ENCODE measurements at regions of chr20 and their contacts with region 1.

Region 1: GRCh38 chr20:62302341-62303058 is at the start of gene ADRM1:
- DNase-seq: peak; percentile 82 to 98
- H3K4me3 ChIP-seq: peak within 1 kb of the TSS; percentile 70 to 92
- H3K27ac ChIP-seq: peak within 1 kb of the TSS; percentile 98 to 99
- H3K4me1 ChIP-seq: peaks cover 12 to 20% of the 10 kb centered on the region in 2 donors
- H3K27me3 ChIP-seq: no peaks in the 10 kb centered on the region
- CTCF ChIP-seq: peak; percentile 98 to 99 (median 99)
- total RNA-seq, gene ADRM1: 236 TPM

Region 2: GRCh38 chr20:62339647-62340070 is 37.2 kb after region 1 on chr20:
- intact Hi-C with region 1: no loop called
- DNase-seq: no peak
- H3K4me3 ChIP-seq: no peak overlapping the region
- H3K27ac ChIP-seq: no peak overlapping the region
- H3K4me1 ChIP-seq: no peaks in the 10 kb centered on the region
- H3K27me3 ChIP-seq: no peaks in the 10 kb centered on the region
- CTCF ChIP-seq: no peak

Region 3: DNA sequence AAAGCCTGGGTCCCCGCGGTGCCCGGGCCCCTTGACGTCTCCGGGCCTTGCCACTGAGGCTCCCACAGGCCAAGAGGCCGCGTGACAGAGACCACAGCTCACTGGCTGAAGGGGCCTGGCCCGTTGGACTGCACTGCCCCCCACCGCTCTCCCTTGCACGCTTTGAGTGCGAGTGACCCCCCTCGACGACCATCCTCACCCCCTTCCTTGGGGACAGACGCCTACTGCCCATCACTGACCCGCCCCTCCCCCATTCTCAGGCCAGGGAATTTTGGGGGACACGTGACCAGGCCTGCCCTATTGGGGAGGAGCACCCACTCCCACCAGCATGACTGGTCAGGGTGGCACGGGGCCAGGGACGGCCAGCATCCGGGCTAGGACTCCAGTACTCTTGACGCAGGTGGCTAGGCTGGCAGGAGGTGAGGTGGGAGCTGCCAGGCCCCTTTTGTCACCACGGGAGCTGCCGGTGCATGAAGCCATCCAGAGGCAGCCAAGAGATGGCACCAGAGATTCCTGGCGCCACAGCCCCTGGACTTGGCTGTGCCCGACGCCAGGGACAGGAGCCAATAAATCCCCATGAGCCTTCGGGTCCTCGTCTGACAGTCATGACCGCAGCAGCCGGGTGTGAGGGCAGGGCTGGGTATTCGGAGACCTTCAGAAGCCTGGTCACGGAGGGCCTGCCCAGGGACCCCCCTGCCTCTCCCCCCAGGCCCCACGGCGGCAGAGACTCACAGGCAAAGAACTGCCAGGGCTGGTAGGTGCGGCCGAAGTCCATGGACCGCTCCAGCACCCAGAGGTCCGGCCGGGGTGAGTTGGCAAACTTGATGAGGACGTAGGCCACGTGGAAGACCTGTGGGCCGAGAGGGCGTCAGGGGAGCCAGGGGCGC is 50.1 kb after region 1 on chr20:
- intact Hi-C with region 1: loop called (anchors 1 kb)
- DNase-seq: peak in 1 of 2 donors; percentile 94
- H3K4me3 ChIP-seq: peak overlapping the region; percentile 16 to 35
- H3K27ac ChIP-seq: peak overlapping the region; percentile 98 to 99
- H3K4me1 ChIP-seq: peaks cover 40 to 54% of the 10 kb centered on the region in 2 donors
- H3K27me3 ChIP-seq: no peaks in the 10 kb centered on the region
- CTCF ChIP-seq: peak; percentile 39 to 61 (median 52)

Region 4: DNA sequence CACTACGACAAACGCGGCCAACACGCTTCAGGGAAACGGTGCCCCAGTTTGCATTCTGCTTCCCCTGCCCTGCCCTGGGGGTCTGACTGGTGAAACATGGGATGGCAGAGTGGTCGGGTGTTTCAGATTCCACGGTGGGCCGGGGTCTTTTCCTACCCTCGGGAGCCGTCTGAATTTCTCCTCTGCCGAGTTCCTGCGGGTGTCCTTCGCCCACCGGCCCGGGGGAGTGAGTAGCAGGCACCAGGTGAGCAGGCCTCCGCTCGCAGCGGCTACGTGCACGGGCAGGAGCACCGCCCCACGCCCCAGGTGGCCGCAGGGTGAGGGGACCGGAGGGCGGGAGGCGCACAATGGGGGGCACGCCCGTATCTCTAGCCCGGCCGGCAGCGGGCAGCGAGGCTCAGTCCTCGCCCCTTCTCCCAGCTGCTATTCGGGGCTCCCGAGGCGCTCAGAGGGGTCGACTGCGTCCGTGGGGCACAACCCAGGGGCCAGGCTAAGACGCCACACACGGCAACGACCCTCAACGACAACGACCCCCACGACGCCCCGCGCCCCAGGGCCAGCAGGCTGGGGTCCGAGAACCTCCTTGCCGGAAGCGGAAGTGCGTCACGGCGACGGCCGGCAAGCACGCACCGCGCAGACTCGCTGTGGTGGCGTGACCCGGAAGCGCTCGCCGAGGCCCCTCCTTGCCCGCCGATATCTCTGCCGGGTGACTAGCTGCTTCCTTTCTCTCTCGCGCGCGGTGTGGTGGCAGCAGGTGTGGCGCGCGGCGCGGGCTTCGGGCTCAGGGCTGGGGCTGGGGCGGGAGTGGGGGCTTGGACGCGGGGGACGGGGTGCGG is 84.1 kb after region 1 on chr20 and contains the start of gene RPS21:
- intact Hi-C with region 1: loop called (anchors 1 kb)
- DNase-seq: peak; percentile 57 to 96
- H3K4me3 ChIP-seq: peak within 1 kb of the TSS; percentile 81 to 93
- H3K27ac ChIP-seq: peak within 1 kb of the TSS; percentile 93 to 94
- H3K4me1 ChIP-seq: peaks cover 15% of the 10 kb centered on the region in 2 donors
- H3K27me3 ChIP-seq: no peaks in the 10 kb centered on the region
- CTCF ChIP-seq: no peak
- total RNA-seq, gene RPS21: 1,828 TPM

Region 5: DNA sequence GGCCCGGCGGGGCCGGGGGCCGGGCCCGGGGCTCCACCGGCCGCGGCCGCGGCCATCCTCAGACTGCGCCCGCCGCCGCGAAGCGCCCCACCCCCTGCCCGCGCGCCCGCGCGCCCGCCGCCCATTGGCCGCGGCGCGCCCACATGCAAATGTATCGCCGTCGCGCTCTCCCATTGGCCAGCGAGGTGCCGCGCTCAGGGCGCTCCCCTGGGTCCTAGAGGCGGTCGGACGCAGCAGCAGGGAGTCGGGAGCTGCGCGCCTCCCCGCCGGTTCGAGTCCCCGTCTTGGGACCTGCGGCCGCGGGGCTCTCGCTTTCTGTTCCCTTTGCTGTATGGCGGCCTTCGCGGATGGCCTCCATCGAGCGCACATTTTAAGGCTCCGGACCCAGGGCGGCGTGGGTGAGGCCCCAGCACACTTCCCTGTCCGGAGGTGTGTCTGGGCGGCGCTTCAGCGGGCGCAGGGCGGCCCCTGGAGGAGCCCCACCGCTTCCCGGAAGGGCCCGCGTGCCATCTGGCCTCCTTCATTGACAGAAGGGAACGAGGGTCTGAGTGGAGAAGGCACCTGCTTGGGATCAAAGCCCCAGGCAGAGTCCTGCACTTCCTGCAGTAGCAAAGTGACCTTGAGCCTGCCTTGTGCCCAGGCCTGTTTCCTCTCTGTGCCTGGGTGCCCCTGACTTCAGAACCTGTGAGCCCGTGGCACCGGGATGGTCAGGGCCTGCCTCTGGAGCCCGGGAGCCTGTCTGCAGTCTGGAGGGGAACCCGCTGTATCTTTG is 104.9 kb after region 1 on chr20 and contains the start of gene CABLES2:
- intact Hi-C with region 1: loop called (anchors 1 kb)
- DNase-seq: peak; percentile 87 to 96
- H3K4me3 ChIP-seq: peak within 1 kb of the TSS; percentile 69 to 81
- H3K27ac ChIP-seq: peak within 1 kb of the TSS; percentile 48 to 72
- H3K4me1 ChIP-seq: peaks cover 10 to 24% of the 10 kb centered on the region in 2 donors
- H3K27me3 ChIP-seq: no peaks in the 10 kb centered on the region
- CTCF ChIP-seq: peak in 1 of 3 experiments; percentile 25
- total RNA-seq, gene CABLES2: 0.43 TPM

Region 6: GRCh38 chr20:62500237-62500864 is 197.9 kb after region 1 on chr20:
- intact Hi-C with region 1: loop called (anchors 5 kb)
- DNase-seq: peak in 1 of 2 donors; percentile 80
- H3K4me3 ChIP-seq: no peak overlapping the region
- H3K27ac ChIP-seq: no peak overlapping the region
- H3K4me1 ChIP-seq: no peaks in the 10 kb centered on the region
- H3K27me3 ChIP-seq: peaks cover 4% of the 10 kb centered on the region
- CTCF ChIP-seq: peak; percentile 75 to 90 (median 90)

Measured in ascending aorta (tissue), 2 donors.